ENCODE measurements at regions of chr9 and their contacts with region 1.

Region 1: GRCh38 chr9:123349691-123350480 is 6.1 kb upstream of the CRB2 start:
- DNase-seq: peak; percentile 44 to 80 (median 57)
- ATAC-seq: peak; percentile 89
- H3K4me3 ChIP-seq: no peak overlapping the region
- H3K4me3 Mint-ChIP-seq: no peak overlapping the region
- H3K27ac ChIP-seq: no peak overlapping the region
- H3K27ac Mint-ChIP-seq: no peak overlapping the region
- H3K4me1 ChIP-seq: peaks cover 12% of the 10 kb centered on the region
- H3K4me1 Mint-ChIP-seq: peaks cover 5% of the 10 kb centered on the region
- H3K27me3 ChIP-seq: no peaks in the 10 kb centered on the region
- H3K27me3 Mint-ChIP-seq: no peaks in the 10 kb centered on the region
- CTCF ChIP-seq: peak; percentile 94

Region 2: GRCh38 chr9:122464633-122465567 is 885.0 kb before region 1 on chr9:
- CTCF ChIA-PET with region 1: no interaction called
- POLR2A ChIA-PET with region 1: no interaction called
- intact Hi-C with region 1: loop called (anchors 5 to 10 kb)
- DNase-seq: peak; percentile 41 to 79 (median 52)
- ATAC-seq: peak; percentile 77
- H3K4me3 ChIP-seq: peak overlapping the region; percentile 56
- H3K4me3 Mint-ChIP-seq: peak overlapping the region; percentile 92
- H3K27ac ChIP-seq: peak overlapping the region in 1 of 2 donors; percentile 42
- H3K27ac Mint-ChIP-seq: peak overlapping the region; percentile 78
- H3K4me1 ChIP-seq: peaks cover 7% of the 10 kb centered on the region
- H3K4me1 Mint-ChIP-seq: peaks cover 17% of the 10 kb centered on the region
- H3K27me3 ChIP-seq: peaks cover 6 to 7% of the 10 kb centered on the region in 2 experiments
- H3K27me3 Mint-ChIP-seq: peaks cover 53% of the 10 kb centered on the region
- CTCF ChIP-seq: peak; percentile 87

Region 3: GRCh38 chr9:123081824-123082223 is 268.1 kb before region 1 on chr9:
- CTCF ChIA-PET with region 1: interaction called, 13 read pairs
- POLR2A ChIA-PET with region 1: interaction called, 5 read pairs
- intact Hi-C with region 1: loop called (anchors 1 kb)
- DNase-seq: peak in 4 of 14 experiments; percentile 21 to 55 (median 40)
- ATAC-seq: peak; percentile 49
- H3K4me3 ChIP-seq: no peak overlapping the region
- H3K4me3 Mint-ChIP-seq: no peak overlapping the region
- H3K27ac ChIP-seq: no peak overlapping the region
- H3K27ac Mint-ChIP-seq: no peak overlapping the region
- H3K4me1 ChIP-seq: no peaks in the 10 kb centered on the region
- H3K4me1 Mint-ChIP-seq: no peaks in the 10 kb centered on the region
- H3K27me3 ChIP-seq: no peaks in the 10 kb centered on the region
- H3K27me3 Mint-ChIP-seq: no peaks in the 10 kb centered on the region
- CTCF ChIP-seq: peak; percentile 65

Region 4: GRCh38 chr9:123102375-123103110 is 247.3 kb before region 1 on chr9:
- CTCF ChIA-PET with region 1: interaction called, 8 read pairs
- POLR2A ChIA-PET with region 1: no interaction called
- intact Hi-C with region 1: loop called (anchors 5 kb)
- DNase-seq: peak in 1 of 14 experiments; percentile 12
- ATAC-seq: no peak
- H3K4me3 ChIP-seq: no peak overlapping the region
- H3K4me3 Mint-ChIP-seq: no peak overlapping the region
- H3K27ac ChIP-seq: no peak overlapping the region
- H3K27ac Mint-ChIP-seq: peak overlapping the region; percentile 55
- H3K4me1 ChIP-seq: no peaks in the 10 kb centered on the region
- H3K4me1 Mint-ChIP-seq: no peaks in the 10 kb centered on the region
- H3K27me3 ChIP-seq: no peaks in the 10 kb centered on the region
- H3K27me3 Mint-ChIP-seq: no peaks in the 10 kb centered on the region
- CTCF ChIP-seq: no peak

Region 5: DNA sequence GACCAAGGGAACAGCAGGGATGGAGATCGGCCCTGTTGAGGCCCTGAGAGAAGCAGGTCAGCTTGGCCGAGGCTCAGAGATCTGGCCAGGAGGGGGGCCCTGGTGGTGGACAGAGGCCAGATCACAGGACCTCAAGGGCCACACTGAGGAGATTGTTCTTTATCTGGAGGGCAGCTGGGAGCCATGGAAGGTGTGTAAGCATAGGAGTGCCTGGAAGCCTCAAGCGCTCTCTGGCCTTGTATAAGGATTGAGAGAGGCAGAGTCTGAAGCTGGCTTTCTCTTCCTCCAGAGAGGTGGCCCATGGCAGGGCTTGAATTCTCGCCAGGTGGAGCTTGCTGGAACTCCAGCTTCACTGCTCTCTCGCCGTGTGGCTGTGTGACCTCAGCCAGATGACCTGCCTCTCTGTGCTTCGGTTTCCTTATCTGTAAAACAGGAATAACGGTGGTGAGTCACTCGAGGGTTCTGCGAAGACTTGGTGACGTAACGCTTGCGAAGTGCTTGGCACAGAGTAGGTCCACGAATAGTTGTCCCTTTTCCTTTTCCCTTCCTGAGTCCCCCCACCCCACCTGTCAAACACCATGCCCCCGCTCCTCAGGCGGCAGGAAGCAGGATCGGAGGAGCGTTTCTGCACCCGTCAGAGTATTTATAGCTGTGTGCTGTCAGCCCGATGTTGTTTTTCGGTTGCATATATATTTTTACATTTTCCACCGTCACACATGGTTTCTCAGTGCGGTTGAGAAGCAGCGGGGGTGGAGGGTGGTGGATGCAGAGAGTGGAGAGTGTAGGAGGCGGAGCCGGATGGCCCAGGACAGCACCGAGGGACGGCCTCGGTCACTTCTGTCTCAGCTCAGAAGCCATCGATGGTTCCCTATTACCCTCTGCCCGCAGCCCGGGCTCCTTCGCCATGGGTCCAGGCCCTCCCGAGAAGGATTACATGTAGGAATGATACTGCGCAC is 10.9 kb before region 1 on chr9:
- CTCF ChIA-PET with region 1: interaction called, 12 read pairs
- POLR2A ChIA-PET with region 1: interaction called, 7 read pairs
- intact Hi-C with region 1: no loop called
- DNase-seq: peak; percentile 8 to 75 (median 32)
- ATAC-seq: peak; percentile 73
- H3K4me3 ChIP-seq: peak overlapping the region; percentile 69
- H3K4me3 Mint-ChIP-seq: peak overlapping the region; percentile 89
- H3K27ac ChIP-seq: peak overlapping the region; percentile 18 to 35
- H3K27ac Mint-ChIP-seq: peak overlapping the region; percentile 85
- H3K4me1 ChIP-seq: peaks cover 29% of the 10 kb centered on the region
- H3K4me1 Mint-ChIP-seq: peaks cover 36% of the 10 kb centered on the region
- H3K27me3 ChIP-seq: no peaks in the 10 kb centered on the region
- H3K27me3 Mint-ChIP-seq: no peaks in the 10 kb centered on the region
- CTCF ChIP-seq: no peak

Region 6: GRCh38 chr9:123373946-123374345 is 24.1 kb after region 1 on chr9:
- CTCF ChIA-PET with region 1: no interaction called
- POLR2A ChIA-PET with region 1: no interaction called
- intact Hi-C with region 1: no loop called
- DNase-seq: no peak
- ATAC-seq: no peak
- H3K4me3 ChIP-seq: no peak overlapping the region
- H3K4me3 Mint-ChIP-seq: no peak overlapping the region
- H3K27ac ChIP-seq: no peak overlapping the region
- H3K27ac Mint-ChIP-seq: no peak overlapping the region
- H3K4me1 ChIP-seq: peaks cover 9% of the 10 kb centered on the region
- H3K4me1 Mint-ChIP-seq: no peaks in the 10 kb centered on the region
- H3K27me3 ChIP-seq: peaks cover 30 to 35% of the 10 kb centered on the region in 2 experiments
- H3K27me3 Mint-ChIP-seq: peaks cover 40% of the 10 kb centered on the region
- CTCF ChIP-seq: no peak

Region 7: GRCh38 chr9:124040935-124041816 is 691.3 kb after region 1 on chr9:
- CTCF ChIA-PET with region 1: no interaction called
- POLR2A ChIA-PET with region 1: no interaction called
- intact Hi-C with region 1: loop called in 1 of 2 experiments (anchors 5 kb)
- DNase-seq: peak in 12 of 14 experiments; percentile 10 to 60 (median 20)
- ATAC-seq: peak; percentile 21
- H3K4me3 ChIP-seq: peak overlapping the region; percentile 12
- H3K4me3 Mint-ChIP-seq: no peak overlapping the region
- H3K27ac ChIP-seq: no peak overlapping the region
- H3K27ac Mint-ChIP-seq: no peak overlapping the region
- H3K4me1 ChIP-seq: peaks cover 5% of the 10 kb centered on the region
- H3K4me1 Mint-ChIP-seq: peaks cover 19% of the 10 kb centered on the region
- H3K27me3 ChIP-seq: peaks cover 50 to 77% of the 10 kb centered on the region in 2 experiments
- H3K27me3 Mint-ChIP-seq: peaks cover 80% of the 10 kb centered on the region
- CTCF ChIP-seq: peak; percentile 68